ENCODE measurements at regions of chr3 and their contacts with region 1.

Region 1: GRCh38 chr3:134473868-134474546 is 11.8 kb downstream of the ANAPC13 start:
- DNase-seq: peak; percentile 90
- H3K4me3 ChIP-seq: no peak overlapping the region
- H3K27ac ChIP-seq: peak overlapping the region; percentile 37
- H3K4me1 ChIP-seq: peaks cover 61% of the 10 kb centered on the region
- H3K27me3 ChIP-seq: no peaks in the 10 kb centered on the region

Region 2: GRCh38 chr3:134212906-134213665 is 260.9 kb before region 1 on chr3:
- in situ Hi-C with region 1: loop called (anchors 10 kb)
- DNase-seq: peak; percentile 72
- H3K4me3 ChIP-seq: no peak overlapping the region
- H3K27ac ChIP-seq: no peak overlapping the region
- H3K4me1 ChIP-seq: no peaks in the 10 kb centered on the region
- H3K27me3 ChIP-seq: no peaks in the 10 kb centered on the region

Region 3: GRCh38 chr3:134308350-134308891 is 165.6 kb before region 1 on chr3:
- in situ Hi-C with region 1: loop called (anchors 5 kb)
- DNase-seq: peak; percentile 85
- H3K4me3 ChIP-seq: peak overlapping the region; percentile 66
- H3K27ac ChIP-seq: peak overlapping the region; percentile 67
- H3K4me1 ChIP-seq: peaks cover 35% of the 10 kb centered on the region
- H3K27me3 ChIP-seq: no peaks in the 10 kb centered on the region

Region 4: DNA sequence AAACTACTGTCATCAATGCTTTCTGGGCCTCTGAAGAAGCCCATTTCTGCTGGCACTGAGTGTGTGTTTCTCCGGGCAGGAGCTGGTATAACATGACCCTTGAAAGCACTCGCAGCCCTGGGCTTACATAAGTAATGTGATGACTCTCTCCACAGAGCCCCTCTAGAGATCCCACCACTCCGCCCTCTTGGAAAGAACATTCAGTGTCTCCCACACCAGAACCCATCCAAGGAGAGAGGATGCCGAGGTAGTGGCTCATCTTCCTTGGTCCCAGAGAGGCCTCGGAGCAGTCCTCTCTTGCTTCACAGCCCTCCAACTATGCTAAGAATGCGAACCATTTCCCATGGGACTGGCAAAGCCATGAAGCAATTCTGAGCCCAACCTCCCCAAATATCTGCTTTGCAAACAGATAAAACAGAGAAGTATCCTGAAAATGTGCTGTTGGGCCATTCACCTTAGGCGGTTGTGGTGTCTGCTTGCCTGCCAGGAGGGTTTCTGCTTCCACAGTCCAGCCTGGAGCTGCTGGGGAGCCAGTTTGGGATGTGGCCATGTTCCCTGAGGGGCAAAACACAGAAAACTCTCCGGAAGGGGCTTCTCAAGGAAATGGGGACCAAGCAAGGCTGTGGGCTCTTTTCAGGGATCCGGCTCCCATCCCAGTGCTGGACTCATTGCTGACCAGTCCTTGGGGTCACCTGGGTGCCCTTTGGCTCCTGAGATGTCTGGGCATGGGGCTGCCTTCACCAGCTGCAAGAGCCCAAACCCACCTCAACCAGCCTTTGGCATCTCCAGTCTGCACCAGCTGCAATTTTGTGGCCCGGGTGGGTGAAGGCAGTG is 147.0 kb before region 1 on chr3:
- in situ Hi-C with region 1: no loop called
- DNase-seq: peak; percentile 99
- H3K4me3 ChIP-seq: peak overlapping the region; percentile 41
- H3K27ac ChIP-seq: peak overlapping the region; percentile 94
- H3K4me1 ChIP-seq: peaks cover 73% of the 10 kb centered on the region
- H3K27me3 ChIP-seq: no peaks in the 10 kb centered on the region

Region 5: GRCh38 chr3:134364061-134364935 is 109.7 kb before region 1 on chr3:
- in situ Hi-C with region 1: loop called (anchors 5 kb)
- DNase-seq: peak; percentile 99
- H3K4me3 ChIP-seq: peak overlapping the region; percentile 56
- H3K27ac ChIP-seq: peak overlapping the region; percentile 99
- H3K4me1 ChIP-seq: peaks cover 96% of the 10 kb centered on the region
- H3K27me3 ChIP-seq: no peaks in the 10 kb centered on the region

Measured in GM23248 (cell line).